H1 (cell line): ENCODE measurements at regions of chr20 and their contacts with region 1.

Region 1: GRCh38 chr20:23245553-23246181 is 104.9 kb upstream of the NXT1 start:
- DNase-seq: peak in 1 of 2 experiments; percentile 66
- H3K4me3 ChIP-seq: no peak overlapping the region
- H3K27ac ChIP-seq: no peak overlapping the region
- H3K4me1 ChIP-seq: no peaks in the 10 kb centered on the region
- H3K27me3 ChIP-seq: no peaks in the 10 kb centered on the region
- CTCF ChIP-seq: peak; percentile 59 to 86 (median 83)
- EP300 ChIP-seq: no peak
- POLR2A ChIP-seq: no peak
- RAD21 ChIP-seq: peak; percentile 47 to 62

Region 2: DNA sequence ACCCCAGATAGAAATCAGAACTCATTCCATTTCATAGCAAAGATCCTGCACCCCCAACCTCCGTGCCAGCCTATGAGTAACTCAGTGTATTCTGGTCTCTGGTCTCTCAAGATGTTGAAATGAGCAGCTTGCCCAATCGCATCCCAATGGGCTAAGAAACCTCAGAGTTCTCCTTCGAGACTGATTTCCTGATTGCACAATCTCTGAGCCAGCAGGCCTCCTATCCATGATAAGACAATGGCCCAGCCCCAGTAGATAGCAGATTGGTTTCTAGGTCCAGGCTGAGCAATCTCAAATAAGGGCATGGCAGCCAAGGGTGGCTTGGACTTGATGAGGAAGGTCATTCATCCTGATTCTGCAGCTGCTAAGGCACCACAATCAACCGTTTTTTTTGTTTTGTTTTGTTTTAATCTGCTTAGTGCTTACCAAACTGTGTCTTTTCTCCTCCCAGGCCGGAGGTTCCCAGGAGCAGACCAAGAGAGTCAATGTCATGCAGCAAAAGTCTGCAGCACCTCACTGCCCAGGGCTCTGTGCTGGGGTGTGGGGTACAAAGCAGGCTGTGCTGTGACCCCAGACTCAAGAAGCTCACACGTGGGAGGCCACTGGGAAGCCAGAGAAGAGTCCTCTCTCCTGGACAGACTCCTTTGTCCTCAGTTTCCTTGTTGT is 20.1 kb before region 1 on chr20:
- CTCF ChIA-PET with region 1: interaction called, 12 read pairs
- POLR2A ChIA-PET with region 1: no interaction called
- DNase-seq: no peak
- H3K4me3 ChIP-seq: no peak overlapping the region
- H3K27ac ChIP-seq: no peak overlapping the region
- H3K4me1 ChIP-seq: no peaks in the 10 kb centered on the region
- H3K27me3 ChIP-seq: no peaks in the 10 kb centered on the region
- CTCF ChIP-seq: no peak
- EP300 ChIP-seq: no peak
- POLR2A ChIP-seq: no peak
- RAD21 ChIP-seq: no peak

Region 3: GRCh38 chr20:23235173-23236027 is 10.3 kb before region 1 on chr20:
- CTCF ChIA-PET with region 1: interaction called, 59 read pairs
- POLR2A ChIA-PET with region 1: no interaction called
- DNase-seq: peak; percentile 39 to 71
- H3K4me3 ChIP-seq: no peak overlapping the region
- H3K27ac ChIP-seq: no peak overlapping the region
- H3K4me1 ChIP-seq: no peaks in the 10 kb centered on the region; a peak in 1 of 7 replicates
- H3K27me3 ChIP-seq: no peaks in the 10 kb centered on the region
- CTCF ChIP-seq: peak; percentile 88 to 94 (median 91)
- EP300 ChIP-seq: no peak
- POLR2A ChIP-seq: no peak
- RAD21 ChIP-seq: peak; percentile 90 to 91

Region 4: DNA sequence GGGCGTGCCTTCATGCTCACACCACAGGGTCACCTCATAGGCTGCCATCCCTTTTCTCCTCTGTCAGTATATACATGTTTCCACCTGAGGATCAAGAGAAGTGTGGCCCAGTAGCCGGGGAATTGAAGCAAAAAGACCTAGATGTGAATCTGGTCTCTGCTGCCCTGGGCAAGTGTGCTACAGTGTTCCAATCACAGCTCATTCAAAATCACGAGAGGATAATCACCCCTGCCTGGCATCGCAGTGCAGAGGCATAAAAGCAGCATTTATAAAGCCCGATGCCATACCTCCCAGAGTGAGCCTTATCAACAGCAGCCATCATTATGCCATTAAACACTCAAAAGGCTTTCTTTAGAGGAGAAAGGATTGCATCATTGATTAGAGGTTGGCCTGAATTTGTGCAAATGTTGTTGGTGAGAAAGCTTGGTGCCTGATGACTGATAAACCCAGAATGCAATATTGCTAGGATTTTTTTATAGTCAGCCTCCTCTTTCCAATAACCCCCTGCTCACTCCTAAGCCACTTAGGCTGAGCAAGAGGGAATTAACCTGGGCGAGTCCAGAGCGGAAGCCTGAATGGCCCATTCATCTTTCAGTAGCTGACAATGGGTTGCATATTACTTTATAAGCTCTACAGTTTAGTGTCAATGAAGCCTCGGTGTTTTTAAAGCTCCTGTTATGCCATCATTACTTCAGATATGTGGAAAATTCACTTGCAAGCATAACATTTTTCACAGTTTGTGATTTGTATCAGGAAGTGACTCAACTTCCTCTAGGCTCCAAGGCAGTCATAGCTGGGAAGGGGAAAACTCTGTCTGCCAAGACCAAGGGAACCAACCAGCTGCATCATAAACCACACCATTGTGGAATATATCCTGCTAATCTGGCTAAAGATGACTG is 12.4 kb after region 1 on chr20:
- CTCF ChIA-PET with region 1: interaction called, 17 read pairs
- POLR2A ChIA-PET with region 1: no interaction called
- DNase-seq: peak in 1 of 2 experiments; percentile 28
- H3K4me3 ChIP-seq: no peak overlapping the region
- H3K27ac ChIP-seq: no peak overlapping the region
- H3K4me1 ChIP-seq: no peaks in the 10 kb centered on the region
- H3K27me3 ChIP-seq: no peaks in the 10 kb centered on the region
- CTCF ChIP-seq: no peak
- EP300 ChIP-seq: no peak
- POLR2A ChIP-seq: no peak
- RAD21 ChIP-seq: no peak

Region 5: GRCh38 chr20:23484081-23484480 is 238.4 kb after region 1 on chr20:
- CTCF ChIA-PET with region 1: no interaction called
- POLR2A ChIA-PET with region 1: no interaction called
- DNase-seq: no peak
- H3K4me3 ChIP-seq: no peak overlapping the region
- H3K27ac ChIP-seq: no peak overlapping the region
- H3K4me1 ChIP-seq: peaks cover 0 to 5% (median 0%) of the 10 kb centered on the region in 4 experiments; a peak in 1 of 7 replicates
- H3K27me3 ChIP-seq: no peaks in the 10 kb centered on the region; a peak in 1 of 7 replicates
- CTCF ChIP-seq: no peak
- EP300 ChIP-seq: no peak
- POLR2A ChIP-seq: no peak
- RAD21 ChIP-seq: no peak